Calu3 (cell line): ENCODE measurements at regions of chr15 and their contacts with region 1.

Region 1: DNA sequence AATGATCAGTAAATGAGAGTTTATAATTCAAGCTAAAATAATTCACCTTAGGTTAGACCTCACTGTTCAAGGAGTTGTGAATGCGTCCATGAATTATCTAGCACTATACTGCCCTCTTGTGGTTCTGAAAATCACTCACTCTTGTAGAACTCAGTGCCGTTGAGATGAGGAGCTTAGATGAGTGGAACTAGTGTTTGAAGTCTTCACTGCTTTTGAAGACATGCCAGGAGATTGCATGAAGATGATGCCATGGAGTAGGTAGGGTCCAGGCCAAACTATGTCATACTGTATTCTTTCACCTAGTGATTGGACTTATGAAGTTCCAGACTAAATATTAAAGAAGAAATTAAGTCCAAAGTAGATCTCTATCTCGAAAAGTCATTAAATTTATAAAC is 28.8 kb downstream of the LYSMD4 start:
- DNase-seq: peak; percentile 64
- H3K4me3 Mint-ChIP-seq: no peak overlapping the region
- H3K27ac Mint-ChIP-seq: peak overlapping the region; percentile 98
- H3K4me1 Mint-ChIP-seq: peaks cover 40% of the 10 kb centered on the region
- H3K27me3 Mint-ChIP-seq: no peaks in the 10 kb centered on the region
- CTCF ChIP-seq: no peak

Region 2: DNA sequence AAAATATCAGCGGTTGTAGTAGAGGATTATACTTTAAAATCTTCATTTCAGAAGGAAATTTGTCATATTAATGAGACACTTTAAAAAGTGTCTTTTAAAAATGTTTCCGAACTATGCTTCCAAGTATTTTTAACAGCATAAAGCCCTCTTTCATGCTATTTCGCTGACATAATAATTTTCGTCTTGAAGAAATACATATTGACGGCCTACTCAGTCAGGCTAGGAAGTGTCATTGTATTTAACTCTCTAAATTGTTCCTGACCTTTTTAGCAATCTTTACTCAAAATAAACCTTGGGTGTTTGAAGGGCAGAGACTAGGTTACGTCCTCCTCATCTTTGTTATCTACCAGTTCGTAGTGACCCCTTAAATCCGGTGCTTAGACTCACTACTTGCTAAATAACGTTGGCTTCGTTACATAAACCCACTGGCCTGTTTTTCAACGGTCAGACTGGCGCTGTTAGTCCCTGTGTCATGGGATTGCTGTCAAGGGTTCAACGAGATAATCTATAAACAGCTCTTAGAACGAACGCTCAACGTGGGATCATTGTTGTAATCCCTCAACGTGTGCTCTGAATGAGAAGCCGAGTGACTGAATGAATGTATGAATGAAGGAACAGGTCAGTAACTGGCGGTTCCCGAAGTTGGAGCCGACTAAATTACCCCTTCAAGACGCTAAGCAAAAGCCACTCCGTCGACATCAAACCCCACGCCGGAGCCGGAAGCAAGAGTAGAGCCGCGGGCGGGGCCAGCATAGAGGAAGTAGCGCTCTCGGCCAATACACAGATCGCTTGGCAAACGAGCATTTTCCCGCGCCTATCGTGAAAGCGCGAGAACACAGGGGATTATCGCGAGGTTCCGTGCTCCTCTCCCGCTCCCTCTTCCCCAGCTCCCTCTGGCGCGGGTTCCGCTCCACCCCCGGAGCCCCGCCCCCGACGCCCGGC is 453.7 kb before region 1 on chr15:
- CTCF ChIA-PET with region 1: interaction called, 11 read pairs
- intact Hi-C with region 1: loop called (anchors 1 kb)
- DNase-seq: peak; percentile 98
- H3K4me3 Mint-ChIP-seq: no peak overlapping the region
- H3K27ac Mint-ChIP-seq: peak overlapping the region; percentile 91
- H3K4me1 Mint-ChIP-seq: peaks cover 24% of the 10 kb centered on the region
- H3K27me3 Mint-ChIP-seq: no peaks in the 10 kb centered on the region
- CTCF ChIP-seq: no peak

Region 3: DNA sequence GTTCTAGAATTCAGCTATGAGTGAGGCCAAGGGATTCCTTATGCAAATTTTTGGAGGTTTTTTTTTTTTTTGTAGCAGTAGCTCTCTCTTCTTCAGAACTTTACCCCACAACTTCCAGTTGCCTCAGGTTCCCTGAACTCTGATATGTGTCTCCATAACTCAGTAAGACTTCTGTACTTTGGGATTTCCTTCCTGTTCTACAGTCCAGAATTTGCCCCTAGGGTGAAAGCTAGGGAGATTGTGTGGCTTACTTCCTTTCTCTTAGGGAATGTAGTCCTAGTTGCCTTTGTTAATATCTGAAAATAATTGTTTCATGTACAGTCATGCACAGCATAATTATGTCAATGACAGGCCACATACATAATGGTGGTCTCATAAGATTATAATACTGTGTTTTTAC is 422.3 kb before region 1 on chr15:
- CTCF ChIA-PET with region 1: interaction called, 12 read pairs
- intact Hi-C with region 1: loop called (anchors 1 kb)
- DNase-seq: no peak
- H3K4me3 Mint-ChIP-seq: no peak overlapping the region
- H3K27ac Mint-ChIP-seq: no peak overlapping the region
- H3K4me1 Mint-ChIP-seq: no peaks in the 10 kb centered on the region
- H3K27me3 Mint-ChIP-seq: no peaks in the 10 kb centered on the region
- CTCF ChIP-seq: no peak

Region 4: DNA sequence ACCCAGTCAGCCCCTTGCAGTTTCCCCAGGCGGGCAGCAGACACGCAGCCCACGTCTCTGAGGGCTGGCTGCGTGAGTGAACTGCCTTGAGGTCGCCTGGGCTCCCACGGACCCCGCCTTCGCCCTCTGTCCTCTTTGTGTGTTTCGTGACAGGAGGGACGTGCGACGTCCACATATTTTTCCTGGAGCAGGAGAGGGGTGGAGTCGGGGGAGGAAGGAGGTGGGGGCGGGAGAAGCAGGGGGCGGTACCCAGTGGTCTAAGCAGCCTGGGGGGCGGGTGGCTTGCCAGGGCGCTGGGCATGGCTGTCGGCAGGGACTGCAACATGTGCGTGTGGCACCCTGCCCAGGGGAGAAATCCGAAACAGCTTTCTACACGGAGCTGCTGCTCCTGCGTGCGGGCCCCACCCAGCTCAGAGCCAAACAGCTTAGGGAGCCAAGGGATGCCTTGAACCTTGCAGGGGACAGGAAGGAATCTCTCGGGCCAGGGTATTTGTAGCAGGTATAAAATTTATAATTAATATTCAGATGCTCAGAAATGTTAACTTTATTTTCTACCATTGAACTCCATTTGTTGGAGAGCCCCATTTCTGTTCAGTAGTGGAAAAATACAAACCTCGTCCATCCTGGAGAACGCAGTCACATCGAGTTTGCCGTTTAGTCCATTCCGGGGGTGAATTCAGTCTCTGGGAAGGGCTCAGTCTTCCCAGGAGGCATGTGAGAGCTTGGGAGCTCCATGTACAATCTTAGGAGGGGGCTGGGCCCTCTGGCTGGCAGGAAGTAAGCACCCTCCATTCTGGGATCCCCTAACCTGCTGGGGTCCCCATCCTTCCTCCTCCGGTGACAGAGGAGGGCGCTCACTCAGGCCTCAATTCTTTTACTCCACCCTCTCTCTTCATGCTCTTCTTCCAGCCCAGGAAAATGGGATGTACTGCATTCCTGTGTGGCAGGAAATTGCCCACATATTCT is 217.8 kb before region 1 on chr15:
- CTCF ChIA-PET with region 1: no interaction called
- intact Hi-C with region 1: loop called (anchors 10 kb)
- DNase-seq: peak; percentile 73
- H3K4me3 Mint-ChIP-seq: peak overlapping the region; percentile 58
- H3K27ac Mint-ChIP-seq: no peak overlapping the region
- H3K4me1 Mint-ChIP-seq: peaks cover 18% of the 10 kb centered on the region
- H3K27me3 Mint-ChIP-seq: peaks cover 14% of the 10 kb centered on the region
- CTCF ChIP-seq: no peak

Region 5: DNA sequence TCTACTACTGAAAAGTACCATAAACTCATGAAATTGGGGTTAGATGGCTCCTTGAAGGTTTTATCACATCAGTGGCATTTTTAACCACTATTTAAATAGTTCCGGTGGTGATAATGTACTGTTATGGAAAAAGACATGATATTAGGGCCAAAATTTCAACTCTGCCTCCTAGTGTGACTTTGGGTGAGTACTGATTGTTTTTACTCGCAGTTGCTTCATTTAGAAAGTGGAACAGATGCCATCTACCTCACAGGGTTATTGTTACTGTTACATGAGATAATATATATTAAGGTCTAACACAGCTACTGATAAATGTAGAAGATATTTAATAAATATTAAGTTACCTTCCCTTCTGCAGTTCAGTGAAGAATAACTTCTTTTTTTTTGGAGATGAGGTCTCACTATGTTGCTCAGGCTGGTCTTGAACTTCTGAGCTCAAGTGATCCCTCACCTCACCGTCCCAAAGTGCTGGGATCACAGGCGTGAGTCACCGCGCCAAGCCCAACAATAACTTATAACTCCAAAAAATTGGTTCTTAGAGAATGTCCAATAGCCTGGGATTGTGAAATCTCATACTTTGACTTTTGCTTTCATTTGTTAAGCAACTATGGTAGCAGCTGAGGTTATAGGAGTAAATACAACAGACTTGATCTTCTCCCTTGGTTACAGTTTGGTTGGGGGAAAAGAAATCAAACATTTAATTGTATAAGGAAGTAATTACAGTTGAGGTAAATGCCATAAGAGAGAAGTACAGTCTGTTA is 90.4 kb before region 1 on chr15:
- CTCF ChIA-PET with region 1: interaction called, 10 read pairs
- intact Hi-C with region 1: no loop called
- DNase-seq: no peak
- H3K4me3 Mint-ChIP-seq: peak overlapping the region; percentile 6
- H3K27ac Mint-ChIP-seq: peak overlapping the region; percentile 84
- H3K4me1 Mint-ChIP-seq: peaks cover 20% of the 10 kb centered on the region
- H3K27me3 Mint-ChIP-seq: no peaks in the 10 kb centered on the region
- CTCF ChIP-seq: no peak

Region 6: GRCh38 chr15:99744142-99744541 is 39.7 kb after region 1 on chr15:
- CTCF ChIA-PET with region 1: no interaction called
- intact Hi-C with region 1: no loop called
- DNase-seq: no peak
- H3K4me3 Mint-ChIP-seq: no peak overlapping the region
- H3K27ac Mint-ChIP-seq: no peak overlapping the region
- H3K4me1 Mint-ChIP-seq: no peaks in the 10 kb centered on the region
- H3K27me3 Mint-ChIP-seq: peaks cover 16% of the 10 kb centered on the region
- CTCF ChIP-seq: no peak

Region 7: GRCh38 chr15:99755692-99756409 is 51.4 kb after region 1 on chr15:
- CTCF ChIA-PET with region 1: interaction called, 14 read pairs
- intact Hi-C with region 1: loop called (anchors 2 kb)
- DNase-seq: peak; percentile 56
- H3K4me3 Mint-ChIP-seq: no peak overlapping the region
- H3K27ac Mint-ChIP-seq: no peak overlapping the region
- H3K4me1 Mint-ChIP-seq: no peaks in the 10 kb centered on the region
- H3K27me3 Mint-ChIP-seq: no peaks in the 10 kb centered on the region
- CTCF ChIP-seq: peak; percentile 70